ENCODE measurements at regions of chr9 and their contacts with region 1.

Region 1: DNA sequence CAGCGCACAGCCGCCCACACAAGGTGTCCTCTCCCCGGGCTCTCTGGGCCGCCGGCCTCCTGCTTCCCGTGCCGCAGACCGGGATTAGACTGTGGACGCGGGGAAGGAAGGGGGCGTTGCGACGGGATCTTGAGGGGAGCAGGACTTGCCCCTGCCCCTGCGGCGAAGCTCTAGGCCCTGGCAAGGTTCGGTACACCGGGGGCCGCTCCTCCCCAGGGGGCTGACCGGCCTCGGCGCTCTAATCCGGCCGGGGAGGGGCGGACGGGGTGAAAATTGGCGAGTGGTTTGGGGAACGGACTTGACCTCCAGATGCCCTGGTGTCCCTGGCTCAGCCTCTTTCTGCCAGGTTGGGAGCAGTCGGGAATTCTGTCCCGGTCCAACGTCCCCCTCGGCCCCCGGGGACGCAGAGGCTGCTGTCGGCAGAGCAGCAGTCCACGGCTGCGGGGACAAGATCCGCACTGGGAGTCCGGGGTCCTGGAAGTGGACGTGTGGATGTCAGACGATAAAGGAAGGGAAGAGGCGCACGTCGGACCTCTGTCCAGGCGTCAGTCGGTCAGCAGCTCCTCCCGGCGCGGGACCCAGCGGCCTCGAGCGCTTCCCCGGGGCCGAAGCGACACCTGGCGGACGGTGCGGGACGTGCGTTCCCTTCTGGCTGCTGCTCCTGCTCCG is 1.9 kb upstream of the CNTFR start:
- DNase-seq: peak in 1 of 2 experiments; percentile 98
- H3K4me3 ChIP-seq: peak overlapping the region in 2 of 4 experiments; percentile 51 to 74; a peak in 4 of 8 replicates
- H3K27ac ChIP-seq: no peak overlapping the region
- H3K4me1 ChIP-seq: peaks cover 4 to 30% (median 16%) of the 10 kb centered on the region in 4 experiments
- H3K27me3 ChIP-seq: peaks cover 67 to 80% (median 75%) of the 10 kb centered on the region in 4 experiments
- CTCF ChIP-seq: peak; percentile 92 to 98 (median 96)
- EP300 ChIP-seq: no peak
- POLR2A ChIP-seq: no peak
- RAD21 ChIP-seq: peak; percentile 91 to 93

Region 2: GRCh38 chr9:34437006-34437925 is 154.1 kb before region 1 on chr9:
- CTCF ChIA-PET with region 1: interaction called, 11 read pairs
- POLR2A ChIA-PET with region 1: no interaction called
- DNase-seq: peak; percentile 47 to 73
- H3K4me3 ChIP-seq: no peak overlapping the region
- H3K27ac ChIP-seq: no peak overlapping the region
- H3K4me1 ChIP-seq: no peaks in the 10 kb centered on the region
- H3K27me3 ChIP-seq: no peaks in the 10 kb centered on the region
- CTCF ChIP-seq: peak in 2 of 3 experiments; percentile 91 to 94; a peak in 3 of 4 replicates
- EP300 ChIP-seq: no peak
- POLR2A ChIP-seq: no peak
- RAD21 ChIP-seq: peak; percentile 95 to 99

Region 3: DNA sequence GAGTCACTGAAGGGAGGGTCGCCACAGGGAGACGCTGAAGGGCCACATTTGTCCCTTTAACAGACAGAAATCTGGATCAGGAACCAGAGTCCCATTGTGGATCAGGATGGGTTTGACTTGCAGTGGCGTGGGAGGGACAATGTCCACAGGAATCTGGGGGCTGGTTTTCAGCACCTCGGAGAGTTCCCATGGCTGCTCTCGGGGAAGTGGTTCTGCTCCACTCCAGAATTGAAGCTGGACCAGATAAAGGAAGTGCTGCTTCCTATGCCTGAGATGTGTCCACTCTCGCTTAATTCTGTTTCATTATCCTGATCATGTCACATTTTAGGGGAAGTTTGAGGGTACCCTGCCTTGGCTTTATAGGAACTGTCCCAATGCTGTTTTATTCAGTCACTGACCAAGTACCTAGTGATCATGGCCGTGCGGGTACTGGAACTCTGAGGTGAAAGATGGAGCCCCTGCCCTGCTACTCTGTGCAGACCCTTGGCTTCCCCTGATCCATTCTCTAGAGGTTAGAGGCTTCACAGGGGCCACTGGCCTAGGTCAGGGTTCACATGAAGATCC is 97.3 kb before region 1 on chr9:
- CTCF ChIA-PET with region 1: interaction called, 15 read pairs
- POLR2A ChIA-PET with region 1: no interaction called
- DNase-seq: peak in 1 of 2 experiments; percentile 84
- H3K4me3 ChIP-seq: no peak overlapping the region
- H3K27ac ChIP-seq: no peak overlapping the region
- H3K4me1 ChIP-seq: no peaks in the 10 kb centered on the region
- H3K27me3 ChIP-seq: no peaks in the 10 kb centered on the region; a peak in 1 of 7 replicates
- CTCF ChIP-seq: no peak
- EP300 ChIP-seq: no peak
- POLR2A ChIP-seq: no peak
- RAD21 ChIP-seq: no peak

Region 4: GRCh38 chr9:34513567-34514214 is 77.7 kb before region 1 on chr9:
- CTCF ChIA-PET with region 1: interaction called, 50 read pairs
- POLR2A ChIA-PET with region 1: interaction called, 3 read pairs
- DNase-seq: peak in 1 of 2 experiments; percentile 63
- H3K4me3 ChIP-seq: peak overlapping the region in 1 of 4 experiments; percentile 37; a peak in 1 of 8 replicates
- H3K27ac ChIP-seq: 0 out of 2 replicates have a peak overlapping the region, but pooled peaks have one; percentile 66
- H3K4me1 ChIP-seq: peaks cover 16 to 33% (median 20%) of the 10 kb centered on the region in 4 experiments
- H3K27me3 ChIP-seq: no peaks in the 10 kb centered on the region; a peak in 1 of 7 replicates
- CTCF ChIP-seq: no peak
- EP300 ChIP-seq: no peak
- POLR2A ChIP-seq: no peak
- RAD21 ChIP-seq: no peak

Region 5: GRCh38 chr9:34559624-34560452 is 31.5 kb before region 1 on chr9:
- CTCF ChIA-PET with region 1: interaction called, 214 read pairs
- POLR2A ChIA-PET with region 1: interaction called, 10 read pairs
- DNase-seq: no peak
- H3K4me3 ChIP-seq: no peak overlapping the region
- H3K27ac ChIP-seq: no peak overlapping the region
- H3K4me1 ChIP-seq: peaks cover 7 to 24% (median 16%) of the 10 kb centered on the region in 4 experiments
- H3K27me3 ChIP-seq: no peaks in the 10 kb centered on the region; a peak in 3 of 7 replicates
- CTCF ChIP-seq: no peak
- EP300 ChIP-seq: no peak
- POLR2A ChIP-seq: no peak
- RAD21 ChIP-seq: no peak

Region 6: GRCh38 chr9:34578241-34579103 is 12.9 kb before region 1 on chr9:
- CTCF ChIA-PET with region 1: interaction called, 98 read pairs
- POLR2A ChIA-PET with region 1: interaction called, 36 read pairs
- DNase-seq: peak in 1 of 2 experiments; percentile 74
- H3K4me3 ChIP-seq: peak overlapping the region; percentile 24 to 55 (median 44)
- H3K27ac ChIP-seq: no peak overlapping the region
- H3K4me1 ChIP-seq: peaks cover 12 to 45% (median 30%) of the 10 kb centered on the region in 4 experiments
- H3K27me3 ChIP-seq: peaks cover 21 to 81% (median 65%) of the 10 kb centered on the region in 4 experiments
- CTCF ChIP-seq: peak in 1 of 3 experiments; percentile 6; a peak in 1 of 4 replicates
- EP300 ChIP-seq: no peak
- POLR2A ChIP-seq: no peak
- RAD21 ChIP-seq: no peak

Region 7: GRCh38 chr9:34637356-34638137 is 46.2 kb after region 1 on chr9 and contains the start of gene SIGMAR1:
- CTCF ChIA-PET with region 1: interaction called, 20 read pairs
- POLR2A ChIA-PET with region 1: interaction called, 3 read pairs
- DNase-seq: peak; percentile 63 to 96
- H3K4me3 ChIP-seq: peak within 1 kb of the TSS; percentile 71 to 78 (median 77)
- H3K27ac ChIP-seq: no peak within 1 kb of the TSS; the same call in 1 of the 2 replicates
- H3K4me1 ChIP-seq: peaks cover 2 to 11% (median 8%) of the 10 kb centered on the region in 4 experiments; a peak in 4 of 7 replicates
- H3K27me3 ChIP-seq: peaks cover 0 to 6% (median 3%) of the 10 kb centered on the region in 4 experiments; a peak in 2 of 7 replicates
- CTCF ChIP-seq: no peak
- EP300 ChIP-seq: peak in 1 of 2 experiments; percentile 98; a peak in 2 of 3 replicates
- POLR2A ChIP-seq: peak; percentile 49 to 61; a peak in 2 of 3 replicates
- RAD21 ChIP-seq: no peak
- total RNA-seq, gene SIGMAR1: 84.2 and 86.8 TPM in 2 replicates